ENCODE measurements at regions of chr6 and their contacts with region 1.

Region 1: DNA sequence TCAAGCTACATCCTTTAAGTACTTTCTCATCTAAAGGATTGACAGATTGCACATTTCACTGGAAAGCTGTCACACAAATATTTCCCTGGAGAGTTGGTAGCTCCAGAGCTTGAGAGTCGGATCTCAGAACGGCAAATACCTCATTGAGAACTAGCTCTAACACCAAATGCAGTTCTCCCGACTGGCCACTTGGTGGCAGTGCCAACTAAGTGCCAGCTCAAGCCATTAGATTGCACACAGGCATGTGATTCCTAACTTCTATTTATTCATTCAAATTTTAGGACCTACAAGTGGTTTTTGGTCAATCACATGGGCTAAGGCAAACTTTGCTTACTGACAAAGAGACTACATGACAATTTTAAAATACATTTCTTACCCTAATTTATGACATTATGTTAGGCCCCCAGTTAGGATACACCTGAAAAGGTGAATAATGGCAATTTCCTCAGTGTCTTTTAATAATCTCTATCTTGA is 7.9 kb upstream of the MCHR2 start:
- DNase-seq: peak; percentile 40 to 52 (median 51)
- ATAC-seq: peak; percentile 88
- H3K4me3 ChIP-seq: no peak overlapping the region
- H3K27ac ChIP-seq: no peak overlapping the region
- H3K4me1 ChIP-seq: no peaks in the 10 kb centered on the region
- H3K27me3 ChIP-seq: no peaks in the 10 kb centered on the region
- CTCF ChIP-seq: peak; percentile 75 to 82 (median 80)
- EP300 ChIP-seq: no peak
- POLR2A ChIP-seq: no peak
- RAD21 ChIP-seq: peak; percentile 59 to 75

Region 2: DNA sequence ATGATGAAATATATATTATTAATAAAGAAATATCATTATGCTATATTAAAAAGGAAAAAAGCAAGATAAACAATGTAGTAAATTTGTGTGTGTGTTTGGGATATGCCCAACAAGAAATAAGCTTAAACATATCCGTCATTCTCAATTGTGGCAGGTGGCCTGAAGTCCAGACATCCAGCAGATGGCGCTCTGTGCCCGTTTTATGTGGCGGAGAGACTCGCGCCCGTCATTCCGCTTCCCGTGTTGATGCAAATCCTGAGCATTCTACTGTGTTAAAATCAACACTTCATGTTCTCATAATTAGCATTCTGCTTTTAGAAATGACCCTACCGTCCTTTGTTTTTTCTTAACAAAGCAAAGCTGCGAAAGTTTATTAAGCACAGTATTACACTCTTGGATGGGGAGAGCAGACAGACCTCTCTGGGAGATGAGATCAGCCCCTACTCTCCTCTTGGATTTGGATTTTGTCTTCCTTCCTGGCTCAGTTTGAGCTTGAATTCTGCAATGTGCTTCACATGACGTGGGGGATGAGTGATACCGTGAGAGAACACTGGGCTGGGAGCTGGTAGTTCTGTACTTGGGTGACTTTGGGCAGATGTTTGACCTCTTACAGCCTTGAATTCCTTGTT is 133.8 kb before region 1 on chr6:
- CTCF ChIA-PET with region 1: no interaction called
- POLR2A ChIA-PET with region 1: no interaction called
- in situ Hi-C with region 1: no loop called
- intact Hi-C with region 1: loop called (anchors 5 kb)
- DNase-seq: peak; percentile 47 to 79 (median 58)
- ATAC-seq: peak; percentile 96
- H3K4me3 ChIP-seq: no peak overlapping the region
- H3K27ac ChIP-seq: no peak overlapping the region
- H3K4me1 ChIP-seq: no peaks in the 10 kb centered on the region
- H3K27me3 ChIP-seq: no peaks in the 10 kb centered on the region
- CTCF ChIP-seq: peak; percentile 73 to 88 (median 87)
- EP300 ChIP-seq: no peak
- POLR2A ChIP-seq: no peak
- RAD21 ChIP-seq: peak; percentile 73 to 82

Region 3: DNA sequence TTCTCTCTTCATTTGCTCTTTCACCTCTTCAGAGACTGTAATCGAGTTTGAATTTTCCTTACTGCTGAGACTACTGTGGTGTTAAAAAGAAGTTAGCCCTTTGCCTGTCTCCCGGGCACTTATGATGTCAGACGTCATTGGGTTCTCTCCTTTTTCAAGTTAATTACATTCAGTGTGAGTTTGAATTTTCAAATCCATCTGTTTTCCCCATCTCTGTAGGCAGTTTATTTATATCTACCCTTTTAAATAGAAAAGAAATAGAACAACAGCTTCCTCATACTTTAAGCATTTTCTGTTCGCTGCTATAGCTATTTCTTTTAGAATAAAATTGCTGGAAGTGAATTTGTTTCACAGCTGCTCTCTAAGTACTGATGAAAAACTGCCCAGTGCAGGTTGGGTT is 89.3 kb before region 1 on chr6:
- CTCF ChIA-PET with region 1: no interaction called
- POLR2A ChIA-PET with region 1: no interaction called
- in situ Hi-C with region 1: no loop called
- intact Hi-C with region 1: no loop called
- DNase-seq: no peak
- ATAC-seq: no peak
- H3K4me3 ChIP-seq: no peak overlapping the region
- H3K27ac ChIP-seq: no peak overlapping the region
- H3K4me1 ChIP-seq: no peaks in the 10 kb centered on the region
- H3K27me3 ChIP-seq: no peaks in the 10 kb centered on the region
- CTCF ChIP-seq: no peak
- EP300 ChIP-seq: no peak
- POLR2A ChIP-seq: no peak
- RAD21 ChIP-seq: no peak

Region 4: DNA sequence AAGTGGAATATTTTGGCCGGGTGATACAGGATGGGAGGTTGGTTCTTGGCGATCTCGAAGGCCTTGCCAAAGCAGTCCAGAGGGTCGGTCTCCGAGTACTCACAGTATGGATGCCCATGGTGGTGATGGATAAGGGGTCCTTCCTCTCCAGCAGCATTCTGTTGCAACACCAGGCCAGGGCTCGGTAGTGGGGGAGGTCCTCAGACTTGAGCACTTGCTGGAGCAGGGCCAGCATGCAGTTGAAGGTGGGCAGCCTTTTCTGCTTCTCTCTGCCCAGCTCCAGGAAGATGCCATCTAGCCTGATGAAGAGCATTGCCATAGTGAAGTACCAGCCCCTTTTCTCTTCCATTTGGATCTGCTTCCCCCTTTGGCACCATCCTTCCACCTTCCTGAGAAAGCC is 91.5 kb after region 1 on chr6:
- CTCF ChIA-PET with region 1: no interaction called
- POLR2A ChIA-PET with region 1: no interaction called
- in situ Hi-C with region 1: loop called (anchors 5 kb)
- intact Hi-C with region 1: no loop called
- DNase-seq: no peak
- ATAC-seq: no peak
- H3K4me3 ChIP-seq: no peak overlapping the region
- H3K27ac ChIP-seq: no peak overlapping the region
- H3K4me1 ChIP-seq: no peaks in the 10 kb centered on the region
- H3K27me3 ChIP-seq: no peaks in the 10 kb centered on the region
- CTCF ChIP-seq: no peak
- EP300 ChIP-seq: no peak
- POLR2A ChIP-seq: no peak
- RAD21 ChIP-seq: no peak

Region 5: GRCh38 chr6:100099189-100100074 is 97.5 kb after region 1 on chr6:
- CTCF ChIA-PET with region 1: interaction called, 3 read pairs
- POLR2A ChIA-PET with region 1: no interaction called
- in situ Hi-C with region 1: loop called (anchors 5 kb)
- intact Hi-C with region 1: loop called (anchors 1 kb)
- DNase-seq: peak in 1 of 4 experiments; percentile 24
- ATAC-seq: peak; percentile 69; the same call in 2 of the 3 replicates
- H3K4me3 ChIP-seq: no peak overlapping the region
- H3K27ac ChIP-seq: no peak overlapping the region
- H3K4me1 ChIP-seq: no peaks in the 10 kb centered on the region
- H3K27me3 ChIP-seq: no peaks in the 10 kb centered on the region
- CTCF ChIP-seq: peak in 2 of 3 experiments; percentile 45 to 69; a peak in 3 of 6 replicates
- EP300 ChIP-seq: no peak
- POLR2A ChIP-seq: no peak
- RAD21 ChIP-seq: peak; percentile 47 to 66; a peak in 3 of 4 replicates

Region 6: GRCh38 chr6:100664274-100665040 is 662.5 kb after region 1 on chr6:
- CTCF ChIA-PET with region 1: no interaction called
- POLR2A ChIA-PET with region 1: no interaction called
- in situ Hi-C with region 1: no loop called
- intact Hi-C with region 1: loop called (anchors 5 kb)
- DNase-seq: peak; percentile 8 to 31 (median 20)
- ATAC-seq: peak; percentile 62
- H3K4me3 ChIP-seq: no peak overlapping the region
- H3K27ac ChIP-seq: no peak overlapping the region
- H3K4me1 ChIP-seq: no peaks in the 10 kb centered on the region
- H3K27me3 ChIP-seq: no peaks in the 10 kb centered on the region
- CTCF ChIP-seq: peak in 2 of 3 experiments; percentile 29 to 65; a peak in 3 of 6 replicates
- EP300 ChIP-seq: no peak
- POLR2A ChIP-seq: no peak
- RAD21 ChIP-seq: peak; percentile 41 to 50

Measured in K562 (cell line).